ENCODE measurements at regions of chr3 and their contacts with region 1.

Region 1: GRCh38 chr3:134600685-134601463 is 49.9 kb downstream of the KY start:
- DNase-seq: peak; percentile 67 to 78 (median 75)
- ATAC-seq: peak; percentile 69 to 86 (median 82)
- H3K4me3 ChIP-seq: no peak overlapping the region
- H3K27ac ChIP-seq: no peak overlapping the region
- H3K4me1 ChIP-seq: no peaks in the 10 kb centered on the region
- H3K27me3 ChIP-seq: no peaks in the 10 kb centered on the region
- CTCF ChIP-seq: peak; percentile 80 to 97 (median 96)
- POLR2A ChIP-seq: no peak

Region 2: DNA sequence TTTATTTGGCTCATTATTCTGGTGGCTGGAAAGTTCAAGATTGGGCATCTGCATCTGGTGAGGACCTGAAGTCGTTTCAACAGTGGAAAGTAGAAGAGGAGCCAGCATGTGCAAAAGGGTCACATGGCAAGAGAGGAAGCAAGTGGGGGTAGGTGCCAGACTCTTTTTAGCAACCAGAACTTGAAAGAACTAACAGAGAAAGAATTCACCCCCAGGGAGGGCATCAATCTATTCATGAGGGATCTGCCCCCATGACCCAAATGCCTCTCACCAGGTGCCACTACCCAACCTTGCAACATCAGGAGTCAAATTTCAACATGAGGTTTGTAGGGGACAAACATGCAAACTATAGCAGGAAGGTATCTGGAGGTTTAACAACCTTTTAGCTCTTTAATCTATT is 339.9 kb before region 1 on chr3:
- intact Hi-C with region 1: no loop called
- DNase-seq: no peak
- ATAC-seq: peak in 2 of 4 donors; percentile 60 to 71
- H3K4me3 ChIP-seq: no peak overlapping the region
- H3K27ac ChIP-seq: no peak overlapping the region
- H3K4me1 ChIP-seq: no peaks in the 10 kb centered on the region
- H3K27me3 ChIP-seq: no peaks in the 10 kb centered on the region
- CTCF ChIP-seq: no peak
- POLR2A ChIP-seq: no peak

Region 3: DNA sequence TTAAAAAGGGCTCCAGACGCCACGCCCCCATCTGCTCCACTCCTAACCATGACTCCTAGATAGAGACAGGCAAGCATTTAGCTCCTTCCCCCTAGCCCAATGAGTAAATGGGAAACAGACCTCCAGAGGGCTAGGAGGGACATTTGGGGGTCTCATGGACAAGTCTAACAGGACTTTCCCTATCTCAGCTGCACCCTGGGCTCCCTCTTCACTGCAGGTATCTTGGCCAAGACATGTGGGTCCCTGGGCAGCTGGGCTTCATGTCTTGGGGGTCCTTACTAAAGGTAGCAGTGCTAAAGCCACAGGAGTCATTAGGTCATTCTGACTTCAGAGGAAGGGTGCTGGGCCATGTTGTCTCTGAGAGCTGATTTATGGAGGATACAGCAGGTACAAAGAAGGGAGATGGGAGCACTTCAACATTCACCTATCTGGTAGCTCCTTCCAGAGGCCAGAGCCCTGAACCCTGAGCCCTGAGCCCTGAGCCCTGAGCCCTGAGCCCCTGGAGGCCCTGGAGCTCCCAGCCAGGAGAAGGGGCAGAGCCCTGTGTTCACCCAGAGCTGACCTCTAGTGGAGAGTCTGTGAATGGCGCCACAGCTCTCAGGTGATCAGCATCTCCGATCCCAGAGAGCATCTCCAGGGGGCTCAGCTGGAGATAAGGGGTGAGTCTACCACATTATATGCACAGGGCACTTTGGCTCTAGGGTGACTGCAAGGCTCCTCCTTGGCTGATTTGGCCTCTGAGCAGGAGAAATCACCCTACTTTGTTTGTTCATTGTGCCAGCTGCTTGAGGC is 154.1 kb after region 1 on chr3:
- intact Hi-C with region 1: loop called in 1 of 2 experiments (anchors 10 kb)
- DNase-seq: peak in 2 of 3 donors; percentile 40 to 51
- ATAC-seq: peak; percentile 64 to 83 (median 72)
- H3K4me3 ChIP-seq: no peak overlapping the region
- H3K27ac ChIP-seq: no peak overlapping the region
- H3K4me1 ChIP-seq: no peaks in the 10 kb centered on the region
- H3K27me3 ChIP-seq: no peaks in the 10 kb centered on the region
- CTCF ChIP-seq: peak; percentile 41 to 64 (median 52)
- POLR2A ChIP-seq: no peak

Region 4: DNA sequence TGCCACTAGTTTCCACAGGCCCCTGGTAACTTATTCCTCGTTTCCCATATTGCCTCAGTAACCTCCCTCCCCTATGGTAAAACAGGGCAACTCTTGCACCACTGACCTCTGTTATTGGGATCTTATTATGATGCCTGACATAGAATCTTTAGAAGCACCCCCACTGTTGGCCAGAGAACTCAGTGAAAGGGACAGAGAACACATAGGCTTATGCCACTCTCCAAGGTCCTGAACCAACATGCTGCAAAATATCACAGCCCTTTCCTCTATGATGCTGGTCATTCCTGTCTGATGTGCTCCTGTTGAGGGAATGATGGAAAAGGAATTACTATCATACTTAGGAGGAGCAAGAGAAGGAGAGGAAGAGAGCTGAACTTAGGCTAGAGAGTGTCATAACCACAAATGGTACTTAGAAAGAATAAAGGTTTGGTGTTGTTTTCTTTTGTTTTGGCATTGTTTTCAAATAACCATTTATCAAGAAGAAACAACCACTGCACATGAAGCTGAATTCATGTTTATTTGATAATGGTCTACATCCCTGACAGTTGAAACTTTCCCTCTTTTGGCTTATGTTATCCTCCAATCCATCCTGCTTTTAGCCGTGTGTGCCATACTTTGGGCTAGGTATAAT is 524.4 kb after region 1 on chr3:
- intact Hi-C with region 1: no loop called
- DNase-seq: no peak
- ATAC-seq: peak in 2 of 4 donors; percentile 33 to 47
- H3K4me3 ChIP-seq: no peak overlapping the region
- H3K27ac ChIP-seq: no peak overlapping the region
- H3K4me1 ChIP-seq: no peaks in the 10 kb centered on the region
- H3K27me3 ChIP-seq: no peaks in the 10 kb centered on the region
- CTCF ChIP-seq: no peak
- POLR2A ChIP-seq: no peak

Region 5: DNA sequence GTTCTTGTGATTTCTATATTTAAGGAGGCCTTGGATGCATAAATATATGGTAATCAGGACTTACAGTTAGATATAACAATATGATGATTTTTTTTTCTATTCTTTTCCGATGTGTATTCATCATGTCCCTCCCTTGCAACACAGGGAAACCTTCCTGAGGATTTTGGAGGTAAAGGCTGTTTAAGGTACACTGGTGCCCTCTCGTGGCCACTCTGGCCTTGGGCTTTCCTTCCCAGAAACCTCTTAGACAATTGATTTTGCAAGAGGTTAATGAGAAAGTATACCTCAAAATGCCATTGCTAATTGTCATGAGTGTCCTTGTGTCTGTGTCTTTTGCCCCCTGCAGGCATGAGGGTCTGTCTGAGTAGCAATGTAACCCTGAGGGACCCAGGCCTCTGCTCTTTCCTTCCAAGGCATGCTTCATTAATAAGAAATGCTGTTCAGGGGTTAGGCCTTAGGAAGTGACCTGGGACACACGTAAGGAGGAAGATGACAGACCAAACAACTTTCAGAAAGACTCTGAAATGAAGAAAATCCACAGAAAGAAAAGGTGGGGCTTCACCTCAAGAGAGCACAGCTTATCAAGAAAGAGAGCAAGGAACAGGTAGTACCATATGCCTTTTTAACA is 1294.3 kb after region 1 on chr3:
- intact Hi-C with region 1: loop called in 1 of 2 experiments (anchors 5 kb)
- DNase-seq: peak; percentile 70 to 73 (median 73)
- ATAC-seq: peak; percentile 88 to 93 (median 92)
- H3K4me3 ChIP-seq: no peak overlapping the region
- H3K27ac ChIP-seq: no peak overlapping the region
- H3K4me1 ChIP-seq: no peaks in the 10 kb centered on the region
- H3K27me3 ChIP-seq: no peaks in the 10 kb centered on the region
- CTCF ChIP-seq: peak; percentile 71 to 94 (median 90)
- POLR2A ChIP-seq: no peak

Measured in right lobe of liver (tissue), 6 donors.